HCT116 (cell line): ENCODE measurements at regions of chr19 and their contacts with region 1.

Region 1: GRCh38 chr19:10858204-10858828 is 10.1 kb downstream of the C19orf38 start:
- DNase-seq: no peak
- ATAC-seq: peak; percentile 54
- H3K4me3 ChIP-seq: no peak overlapping the region
- H3K27ac ChIP-seq: no peak overlapping the region
- H3K4me1 ChIP-seq: peaks cover under 1 to 22% of the 10 kb centered on the region in 2 experiments; a peak in 3 of 4 replicates
- H3K27me3 ChIP-seq: no peaks in the 10 kb centered on the region
- CTCF ChIP-seq: peak; percentile 64 to 99 (median 96)
- POLR2A ChIP-seq: no peak
- RAD21 ChIP-seq: peak; percentile 44; the same call in 1 of the 2 replicates

Region 2: GRCh38 chr19:10690341-10690781 is 168.0 kb before region 1 on chr19:
- CTCF ChIA-PET with region 1: no interaction called
- POLR2A ChIA-PET with region 1: no interaction called
- RAD21 ChIA-PET with region 1: no interaction called
- intact Hi-C with region 1: no loop called
- DNase-seq: no peak
- ATAC-seq: peak; percentile 21; the same call in 1 of the 2 replicates
- H3K4me3 ChIP-seq: no peak overlapping the region
- H3K27ac ChIP-seq: no peak overlapping the region
- H3K4me1 ChIP-seq: peaks cover 2 to 5% of the 10 kb centered on the region in 2 experiments; a peak in 3 of 4 replicates
- H3K27me3 ChIP-seq: no peaks in the 10 kb centered on the region
- CTCF ChIP-seq: no peak
- POLR2A ChIP-seq: no peak
- RAD21 ChIP-seq: no peak

Region 3: GRCh38 chr19:10835754-10836477 is 22.4 kb before region 1 on chr19 and contains the start of gene TMED1:
- CTCF ChIA-PET with region 1: interaction called, 52 read pairs
- POLR2A ChIA-PET with region 1: interaction called, 7 read pairs
- RAD21 ChIA-PET with region 1: no interaction called
- intact Hi-C with region 1: no loop called
- DNase-seq: peak; percentile 99
- ATAC-seq: peak; percentile 87
- H3K4me3 ChIP-seq: peak within 1 kb of the TSS; percentile 72 to 83
- H3K27ac ChIP-seq: peak within 1 kb of the TSS; percentile 94
- H3K4me1 ChIP-seq: peaks cover 10 to 22% of the 10 kb centered on the region in 2 experiments; a peak in 3 of 4 replicates
- H3K27me3 ChIP-seq: no peaks in the 10 kb centered on the region
- CTCF ChIP-seq: peak in 2 of 3 experiments; percentile 25 to 32; a peak in 5 of 6 replicates
- POLR2A ChIP-seq: no peak
- RAD21 ChIP-seq: peak; percentile 34
- total RNA-seq, gene TMED1: 26.3 TPM

Region 4: GRCh38 chr19:10846500-10847202 is 11.7 kb before region 1 on chr19:
- CTCF ChIA-PET with region 1: interaction called, 47 read pairs
- POLR2A ChIA-PET with region 1: interaction called, 3 read pairs
- RAD21 ChIA-PET with region 1: no interaction called
- intact Hi-C with region 1: no loop called
- DNase-seq: no peak
- ATAC-seq: no peak
- H3K4me3 ChIP-seq: no peak overlapping the region
- H3K27ac ChIP-seq: no peak overlapping the region
- H3K4me1 ChIP-seq: no peaks in the 10 kb centered on the region
- H3K27me3 ChIP-seq: no peaks in the 10 kb centered on the region
- CTCF ChIP-seq: no peak
- POLR2A ChIP-seq: no peak
- RAD21 ChIP-seq: no peak

Region 5: DNA sequence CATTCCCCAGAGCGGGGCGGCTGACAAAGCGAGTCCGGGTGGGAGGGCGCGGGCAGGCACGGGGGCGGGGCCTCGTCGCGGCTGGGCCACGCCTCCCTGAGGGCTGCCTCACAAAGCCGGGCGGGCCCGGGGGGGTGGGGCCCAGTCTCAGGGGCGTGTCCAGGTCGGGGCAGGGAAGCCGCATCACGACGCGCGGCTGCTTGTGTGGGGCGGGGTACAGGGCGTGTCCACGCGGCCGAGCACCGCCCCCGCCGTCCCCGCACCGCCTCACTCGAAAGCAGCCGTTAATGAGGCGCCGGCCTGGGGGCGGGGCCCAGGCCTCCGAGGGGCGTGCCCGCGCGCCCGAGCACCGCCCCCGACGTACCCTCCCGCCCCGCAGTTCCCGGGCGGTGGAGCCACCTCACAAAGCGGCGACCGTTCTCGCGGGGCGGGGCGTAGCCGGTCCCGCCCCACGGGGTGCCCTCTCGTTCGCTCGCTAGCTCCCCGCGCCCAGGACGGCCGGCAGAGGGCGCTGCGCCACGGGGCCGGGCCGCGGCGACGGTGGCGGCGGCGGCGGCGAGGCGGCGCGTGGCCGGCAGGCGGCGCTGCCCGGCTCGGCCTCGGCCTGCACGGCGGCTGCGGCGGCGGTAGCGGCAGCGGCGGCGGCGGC is 12.8 kb after region 1 on chr19 and contains the start of gene CARM1:
- CTCF ChIA-PET with region 1: interaction called, 47 read pairs
- POLR2A ChIA-PET with region 1: no interaction called
- RAD21 ChIA-PET with region 1: interaction called, 3 to 4 read pairs
- intact Hi-C with region 1: no loop called
- DNase-seq: peak; percentile 89
- ATAC-seq: peak; percentile 89
- H3K4me3 ChIP-seq: peak within 1 kb of the TSS; percentile 77 to 86
- H3K27ac ChIP-seq: peak within 1 kb of the TSS; percentile 89
- H3K4me1 ChIP-seq: peaks cover 27 to 35% of the 10 kb centered on the region in 2 experiments
- H3K27me3 ChIP-seq: no peaks in the 10 kb centered on the region
- CTCF ChIP-seq: peak in 2 of 3 experiments; percentile 65 to 69; a peak in 5 of 6 replicates
- POLR2A ChIP-seq: no peak
- RAD21 ChIP-seq: no peak
- total RNA-seq, gene CARM1: 103 TPM